Activated CD4-positive, alpha-beta T cell treated with anti-CD3 and anti-CD28 coated beads, Interleukin-2, amount 10 ng/mL, durations not matched to agents 7 days and 5 days (primary cell): ENCODE measurements at regions of chr19 and their contacts with region 1.

Region 1: GRCh38 chr19:45547976-45548609 is 36.5 kb downstream of the OPA3 start:
- DNase-seq: no peak
- H3K4me3 Mint-ChIP-seq: no peak overlapping the region
- H3K27ac Mint-ChIP-seq: no peak overlapping the region
- H3K4me1 Mint-ChIP-seq: peaks cover 6% of the 10 kb centered on the region
- H3K27me3 Mint-ChIP-seq: no peaks in the 10 kb centered on the region

Region 2: GRCh38 chr19:45558399-45558878 is 10.3 kb after region 1 on chr19:
- CTCF ChIA-PET with region 1: interaction called, 13 read pairs
- POLR2A ChIA-PET with region 1: no interaction called
- DNase-seq: peak; percentile 83
- H3K4me3 Mint-ChIP-seq: no peak overlapping the region
- H3K27ac Mint-ChIP-seq: no peak overlapping the region
- H3K4me1 Mint-ChIP-seq: peaks cover 24% of the 10 kb centered on the region
- H3K27me3 Mint-ChIP-seq: no peaks in the 10 kb centered on the region

Region 3: DNA sequence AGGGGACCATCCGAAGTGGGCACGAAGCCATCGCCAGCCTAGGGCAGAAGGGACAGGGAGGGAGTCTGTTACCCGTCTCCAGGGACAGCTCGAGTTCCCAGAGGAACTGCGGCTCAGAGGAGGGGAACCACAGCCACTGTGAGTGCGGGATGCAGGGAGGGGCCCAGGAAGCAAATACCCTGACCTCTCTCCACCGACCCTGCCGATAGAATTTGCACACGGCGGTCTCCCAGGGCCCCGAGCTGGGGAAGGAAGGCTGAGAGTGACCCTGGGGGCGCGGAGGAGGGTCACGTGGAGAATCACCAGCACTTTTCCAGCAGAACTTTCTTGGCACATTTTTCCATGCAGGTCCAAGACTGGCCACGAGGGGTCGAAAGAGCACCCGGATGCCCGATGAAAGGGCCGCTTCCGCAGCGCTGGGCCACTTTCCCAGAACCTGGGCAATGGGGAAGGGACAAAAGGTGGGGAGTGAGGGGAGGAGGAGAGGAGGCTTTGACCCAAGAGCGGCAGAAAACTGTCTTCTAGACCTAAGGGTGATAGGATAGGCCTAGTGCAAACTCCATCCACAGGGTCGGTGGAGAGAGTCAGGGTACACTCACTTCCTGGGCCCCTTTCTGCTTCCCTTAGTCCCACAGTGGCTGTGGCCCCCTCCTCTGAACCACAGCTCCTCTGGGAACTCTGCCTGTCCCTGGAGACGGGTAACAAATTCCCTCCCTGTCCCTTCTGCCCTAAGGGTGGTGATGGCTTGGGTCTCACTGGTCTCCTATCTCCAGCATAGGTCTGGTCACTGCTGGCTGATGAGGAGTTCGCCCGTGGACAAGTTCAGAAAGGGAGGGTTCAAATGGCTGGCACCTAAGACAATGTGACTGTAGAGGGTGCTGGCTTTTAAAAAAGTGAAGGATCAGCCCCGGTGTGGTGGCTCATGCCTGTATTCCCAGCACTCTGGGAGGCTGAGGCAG is 59.3 kb after region 1 on chr19:
- CTCF ChIA-PET with region 1: no interaction called
- POLR2A ChIA-PET with region 1: no interaction called
- DNase-seq: peak; percentile 40
- H3K4me3 Mint-ChIP-seq: no peak overlapping the region
- H3K27ac Mint-ChIP-seq: peak overlapping the region; percentile 85
- H3K4me1 Mint-ChIP-seq: peaks cover 16% of the 10 kb centered on the region
- H3K27me3 Mint-ChIP-seq: peaks cover 10% of the 10 kb centered on the region